ENCODE measurements at regions of chr1 and their contacts with region 1.

Region 1: DNA sequence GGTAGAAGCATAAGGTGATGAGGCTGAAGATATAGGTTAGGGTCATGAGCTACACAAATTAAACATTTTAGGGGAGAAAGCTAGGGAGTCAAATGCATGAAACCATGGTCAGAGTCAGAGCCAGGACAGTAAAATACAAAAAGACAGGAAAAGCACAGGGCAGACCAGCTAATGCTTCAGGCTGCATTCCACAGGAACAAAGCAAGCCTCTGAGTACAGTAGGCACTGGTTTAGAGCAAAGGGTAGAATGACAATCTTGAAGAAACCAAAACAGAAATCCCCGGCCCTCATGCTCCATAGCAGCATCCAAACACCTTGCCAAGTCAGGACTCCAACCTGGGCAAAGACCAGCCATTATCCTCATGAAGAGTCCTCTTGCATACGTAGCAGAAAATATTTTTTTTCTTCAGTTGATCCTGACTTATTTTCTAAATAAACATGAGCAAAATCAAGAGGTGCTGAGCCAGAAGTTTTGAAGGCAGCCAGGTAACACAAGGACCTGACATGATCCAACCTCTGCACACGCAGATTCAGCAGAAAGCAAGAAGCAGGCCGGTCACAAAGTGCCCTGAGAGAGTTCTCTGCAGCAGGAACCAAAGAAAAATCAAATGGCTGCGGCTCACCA is 273.1 kb downstream of the TTLL7 start:
- DNase-seq: no peak
- ATAC-seq: no peak; the same call in 1 of the 2 replicates
- H3K4me3 ChIP-seq: no peak overlapping the region
- H3K27ac ChIP-seq: no peak overlapping the region
- H3K4me1 ChIP-seq: no peaks in the 10 kb centered on the region
- H3K27me3 ChIP-seq: no peaks in the 10 kb centered on the region
- CTCF ChIP-seq: no peak

Region 2: GRCh38 chr1:83706354-83706938 is 19.4 kb before region 1 on chr1:
- CTCF ChIA-PET with region 1: no interaction called
- POLR2A ChIA-PET with region 1: no interaction called
- in situ Hi-C with region 1: no loop called
- intact Hi-C with region 1: no loop called
- DNase-seq: no peak
- ATAC-seq: no peak
- H3K4me3 ChIP-seq: no peak overlapping the region
- H3K27ac ChIP-seq: no peak overlapping the region
- H3K4me1 ChIP-seq: no peaks in the 10 kb centered on the region
- H3K27me3 ChIP-seq: peaks cover 5% of the 10 kb centered on the region; the same call in 1 of the 2 replicates
- CTCF ChIP-seq: no peak

Region 3: DNA sequence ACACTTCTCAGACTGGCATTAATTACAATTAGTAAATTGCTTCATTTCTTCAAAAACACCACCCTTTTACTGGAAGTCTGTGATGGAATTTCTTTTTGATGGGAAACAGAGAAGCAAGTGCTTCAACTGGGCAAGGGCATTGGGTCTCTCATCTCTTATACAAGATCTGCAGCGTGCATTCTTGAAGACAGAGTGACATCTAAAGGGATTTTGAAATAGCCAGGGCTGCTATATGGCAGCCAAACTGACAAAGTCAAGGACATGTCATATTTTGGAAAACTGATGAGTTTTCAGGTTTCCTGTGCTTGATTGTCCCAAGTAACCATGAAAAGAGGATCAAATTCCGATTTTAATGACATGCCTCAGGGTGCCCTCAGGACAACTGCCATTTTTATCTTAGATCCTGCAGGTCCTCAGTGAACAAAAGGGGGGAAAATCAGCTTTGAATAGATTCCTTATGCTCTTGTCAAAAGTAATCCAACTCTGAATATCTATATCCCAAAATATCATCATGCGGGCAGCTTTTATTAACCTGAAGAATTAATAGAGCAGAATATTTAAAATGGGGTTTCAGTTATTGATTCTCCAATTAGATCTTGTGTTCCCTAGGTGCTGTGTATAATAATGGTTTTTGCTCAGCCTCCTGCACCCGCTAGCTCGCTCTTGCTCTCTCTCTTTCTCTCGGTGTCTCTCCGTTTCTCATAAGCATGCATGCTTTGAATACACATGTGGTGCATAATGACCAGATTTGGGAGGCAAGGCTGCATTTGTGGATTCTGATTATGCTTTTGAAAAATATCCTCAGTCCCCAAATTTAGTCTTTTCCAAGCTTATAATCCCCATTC is 51.3 kb after region 1 on chr1:
- CTCF ChIA-PET with region 1: no interaction called
- POLR2A ChIA-PET with region 1: no interaction called
- in situ Hi-C with region 1: no loop called
- intact Hi-C with region 1: loop called (anchors 5 kb)
- DNase-seq: no peak
- ATAC-seq: no peak
- H3K4me3 ChIP-seq: no peak overlapping the region
- H3K27ac ChIP-seq: no peak overlapping the region
- H3K4me1 ChIP-seq: no peaks in the 10 kb centered on the region
- H3K27me3 ChIP-seq: peaks cover 50% of the 10 kb centered on the region
- CTCF ChIP-seq: peak; percentile 6; the same call in 1 of the 2 replicates